Natural killer cell (primary cell): ENCODE measurements at regions of chr16 and their contacts with region 1.

Region 1: GRCh38 chr16:74998481-74999218 is at the start of gene ZNRF1:
- DNase-seq: peak; percentile 73 to 90
- ATAC-seq: peak; percentile 79 to 89 (median 83)
- H3K4me3 ChIP-seq: peak within 1 kb of the TSS; percentile 53
- H3K4me3 Mint-ChIP-seq: peak within 1 kb of the TSS; percentile 88
- H3K27ac ChIP-seq: no peak within 1 kb of the TSS
- H3K27ac Mint-ChIP-seq: peak within 1 kb of the TSS; percentile 69 to 78
- H3K4me1 ChIP-seq: peaks cover 19% of the 10 kb centered on the region
- H3K4me1 Mint-ChIP-seq: peaks cover 18 to 19% of the 10 kb centered on the region in 2 donors
- H3K27me3 ChIP-seq: peaks cover 7% of the 10 kb centered on the region
- H3K27me3 Mint-ChIP-seq: peaks cover 32 to 37% of the 10 kb centered on the region in 2 donors
- CTCF ChIP-seq: peak; percentile 72
- total RNA-seq, gene ZNRF1: 2.4 to 5.1 (median 3.4) TPM

Region 2: GRCh38 chr16:74825941-74826542 is 172.6 kb before region 1 on chr16:
- intact Hi-C with region 1: no loop called
- DNase-seq: no peak
- ATAC-seq: no peak
- H3K4me3 ChIP-seq: no peak overlapping the region
- H3K4me3 Mint-ChIP-seq: no peak overlapping the region
- H3K27ac ChIP-seq: no peak overlapping the region
- H3K27ac Mint-ChIP-seq: no peak overlapping the region
- H3K4me1 ChIP-seq: no peaks in the 10 kb centered on the region
- H3K4me1 Mint-ChIP-seq: no peaks in the 10 kb centered on the region
- H3K27me3 ChIP-seq: no peaks in the 10 kb centered on the region
- H3K27me3 Mint-ChIP-seq: peaks cover 21 to 25% of the 10 kb centered on the region in 2 donors
- CTCF ChIP-seq: no peak

Region 3: GRCh38 chr16:74984535-74985296 is 13.9 kb before region 1 on chr16 and contains the start of gene WDR59:
- intact Hi-C with region 1: loop called (anchors 1 kb)
- DNase-seq: peak; percentile 97 to 100
- ATAC-seq: peak; percentile 98 to 100 (median 98)
- H3K4me3 ChIP-seq: peak within 1 kb of the TSS; percentile 79
- H3K4me3 Mint-ChIP-seq: peak within 1 kb of the TSS; percentile 94
- H3K27ac ChIP-seq: peak within 1 kb of the TSS; percentile 55
- H3K27ac Mint-ChIP-seq: peak within 1 kb of the TSS; percentile 79 to 82
- H3K4me1 ChIP-seq: peaks cover 11% of the 10 kb centered on the region
- H3K4me1 Mint-ChIP-seq: peaks cover 3 to 7% of the 10 kb centered on the region in 2 donors
- H3K27me3 ChIP-seq: no peaks in the 10 kb centered on the region
- H3K27me3 Mint-ChIP-seq: no peaks in the 10 kb centered on the region
- CTCF ChIP-seq: no peak
- total RNA-seq, gene WDR59: 60.5 to 83.7 (median 73.2) TPM

Region 4: GRCh38 chr16:75064403-75065148 is 65.9 kb after region 1 on chr16:
- intact Hi-C with region 1: loop called (anchors 5 kb)
- DNase-seq: peak in 1 of 2 donors; percentile 45
- ATAC-seq: peak; percentile 22 to 28 (median 25)
- H3K4me3 ChIP-seq: no peak overlapping the region
- H3K4me3 Mint-ChIP-seq: peak overlapping the region; percentile 84
- H3K27ac ChIP-seq: no peak overlapping the region
- H3K27ac Mint-ChIP-seq: peak overlapping the region; percentile 53 to 84
- H3K4me1 ChIP-seq: peaks cover 30% of the 10 kb centered on the region
- H3K4me1 Mint-ChIP-seq: peaks cover 17 to 20% of the 10 kb centered on the region in 2 donors
- H3K27me3 ChIP-seq: no peaks in the 10 kb centered on the region
- H3K27me3 Mint-ChIP-seq: peaks cover 21 to 30% of the 10 kb centered on the region in 2 donors
- CTCF ChIP-seq: no peak

Region 5: GRCh38 chr16:75110637-75111513 is 112.2 kb after region 1 on chr16:
- intact Hi-C with region 1: loop called (anchors 1 kb)
- DNase-seq: peak; percentile 76 to 92
- ATAC-seq: peak; percentile 92 to 99 (median 97)
- H3K4me3 ChIP-seq: no peak overlapping the region
- H3K4me3 Mint-ChIP-seq: no peak overlapping the region
- H3K27ac ChIP-seq: no peak overlapping the region
- H3K27ac Mint-ChIP-seq: peak overlapping the region in 1 of 2 donors; percentile 31
- H3K4me1 ChIP-seq: peaks cover 37% of the 10 kb centered on the region
- H3K4me1 Mint-ChIP-seq: peaks cover 0 to 20% of the 10 kb centered on the region in 2 donors
- H3K27me3 ChIP-seq: peaks cover 6% of the 10 kb centered on the region
- H3K27me3 Mint-ChIP-seq: peaks cover 24 to 42% of the 10 kb centered on the region in 2 donors
- CTCF ChIP-seq: peak; percentile 78

Region 6: GRCh38 chr16:75121949-75122568 is 123.4 kb after region 1 on chr16:
- intact Hi-C with region 1: no loop called
- DNase-seq: no peak
- ATAC-seq: no peak
- H3K4me3 ChIP-seq: no peak overlapping the region
- H3K4me3 Mint-ChIP-seq: no peak overlapping the region
- H3K27ac ChIP-seq: no peak overlapping the region
- H3K27ac Mint-ChIP-seq: no peak overlapping the region
- H3K4me1 ChIP-seq: no peaks in the 10 kb centered on the region
- H3K4me1 Mint-ChIP-seq: no peaks in the 10 kb centered on the region
- H3K27me3 ChIP-seq: no peaks in the 10 kb centered on the region
- H3K27me3 Mint-ChIP-seq: peaks cover 0 to 3% of the 10 kb centered on the region in 2 donors
- CTCF ChIP-seq: no peak